ENCODE measurements at regions of chr7 and their contacts with region 1.

Region 1: DNA sequence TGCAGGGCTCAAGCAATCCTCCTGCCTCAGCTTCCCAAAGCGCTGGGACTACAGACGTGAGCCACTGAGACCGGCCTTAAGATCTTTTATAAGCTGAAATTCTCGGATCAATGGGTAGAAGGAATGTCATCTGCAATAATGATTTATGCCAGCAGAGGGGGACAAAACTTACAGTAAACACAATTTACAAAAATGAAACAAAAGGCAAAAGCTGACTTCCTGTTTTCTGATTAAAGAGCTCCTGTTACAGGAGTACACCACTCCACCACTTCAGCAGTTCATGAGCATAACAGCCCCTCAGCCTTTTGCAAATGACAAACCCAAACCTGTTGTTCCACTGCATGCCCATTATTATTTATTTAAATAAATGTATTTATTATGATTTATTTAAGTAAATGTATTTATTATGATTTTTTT is 88.5 kb upstream of the ATP6V0A4 start:
- H3K4me3 Mint-ChIP-seq: no peak overlapping the region
- H3K27ac Mint-ChIP-seq: no peak overlapping the region
- H3K4me1 Mint-ChIP-seq: no peaks in the 10 kb centered on the region
- H3K27me3 Mint-ChIP-seq: no peaks in the 10 kb centered on the region

Region 2: GRCh38 chr7:138854115-138854645 is 32.3 kb before region 1 on chr7:
- intact Hi-C with region 1: no loop called
- H3K4me3 Mint-ChIP-seq: no peak overlapping the region
- H3K27ac Mint-ChIP-seq: no peak overlapping the region
- H3K4me1 Mint-ChIP-seq: no peaks in the 10 kb centered on the region
- H3K27me3 Mint-ChIP-seq: no peaks in the 10 kb centered on the region

Region 3: DNA sequence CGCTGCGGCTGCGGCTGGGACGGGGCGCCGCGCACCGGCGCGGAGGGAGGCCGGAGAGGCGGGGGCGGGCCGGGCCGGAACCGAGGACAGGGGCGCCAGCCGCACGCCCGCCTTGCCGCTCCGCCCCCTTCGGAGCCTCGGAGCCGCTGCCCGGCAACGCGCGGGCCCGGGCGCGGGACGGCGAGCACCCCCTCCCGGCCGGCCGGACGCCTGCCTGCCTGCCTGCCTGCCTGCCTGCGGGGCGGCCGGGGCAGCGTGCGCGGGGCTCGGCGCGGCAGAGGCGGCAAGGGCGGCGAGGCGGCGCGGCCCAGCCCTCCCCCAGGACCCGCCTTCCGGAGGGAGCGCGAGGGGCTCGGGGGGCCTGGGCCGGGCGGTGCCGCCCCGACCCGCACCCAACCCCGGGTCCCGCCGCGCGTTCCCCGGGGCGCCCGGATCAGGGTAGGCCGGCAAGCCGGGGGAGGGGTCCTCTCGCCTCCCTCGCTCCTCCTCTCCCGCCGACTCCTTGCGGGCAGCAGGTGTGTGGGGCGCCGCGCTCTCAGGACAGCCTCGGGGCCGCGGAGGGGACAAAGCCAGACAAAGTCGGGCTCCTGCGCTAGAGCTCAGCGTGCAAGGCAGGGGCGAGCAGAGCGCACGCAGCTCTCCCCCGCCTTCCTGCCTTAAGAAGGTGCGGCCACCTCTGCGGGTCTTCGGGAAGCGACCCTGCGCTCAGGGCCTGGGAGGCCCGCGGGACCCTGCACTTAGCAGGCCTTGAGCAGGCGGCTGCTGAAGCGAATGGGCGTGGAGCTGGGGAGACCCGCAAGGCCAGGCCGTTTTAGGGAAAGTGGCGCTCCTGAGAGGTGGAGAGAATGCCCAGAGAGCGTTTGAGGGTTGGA is 95.1 kb after region 1 on chr7 and contains the start of gene KIAA1549:
- intact Hi-C with region 1: loop called (anchors 2 kb)
- H3K4me3 Mint-ChIP-seq: peak within 1 kb of the TSS; percentile 82
- H3K27ac Mint-ChIP-seq: no peak within 1 kb of the TSS
- H3K4me1 Mint-ChIP-seq: peaks cover 15% of the 10 kb centered on the region
- H3K27me3 Mint-ChIP-seq: peaks cover 45% of the 10 kb centered on the region

Region 4: DNA sequence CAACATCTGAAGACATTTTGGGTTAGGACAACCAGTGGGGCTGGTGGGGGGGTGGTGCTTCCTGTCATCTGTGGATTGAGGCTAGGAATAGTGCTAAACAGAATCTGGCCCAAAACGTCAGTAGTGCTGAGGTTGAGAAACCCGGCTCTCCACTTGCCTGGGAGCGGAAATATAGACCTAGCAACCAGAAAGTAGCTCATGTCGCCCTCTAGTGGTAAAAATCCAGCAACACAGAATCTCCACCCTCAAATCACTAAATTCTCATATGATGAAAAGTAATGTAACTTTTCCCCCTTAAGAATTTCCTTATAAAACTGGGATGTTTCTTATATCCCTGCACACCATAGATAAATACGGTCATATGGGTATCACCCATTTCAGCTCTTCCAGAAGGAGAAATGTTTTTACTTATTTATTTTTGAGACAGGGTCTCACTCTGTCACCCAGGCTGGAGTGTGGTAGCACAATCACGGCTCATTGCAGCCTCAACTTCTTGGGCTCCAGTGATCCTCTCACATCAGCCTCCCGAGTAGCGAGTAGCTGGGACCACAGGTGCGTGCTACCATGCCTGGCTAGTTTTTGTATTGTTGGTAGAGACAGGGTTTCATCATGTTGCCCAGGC is 188.6 kb after region 1 on chr7:
- intact Hi-C with region 1: loop called (anchors 10 kb)
- H3K4me3 Mint-ChIP-seq: no peak overlapping the region
- H3K27ac Mint-ChIP-seq: no peak overlapping the region
- H3K4me1 Mint-ChIP-seq: peaks cover 23% of the 10 kb centered on the region
- H3K27me3 Mint-ChIP-seq: no peaks in the 10 kb centered on the region

Measured in dendritic cell treated with granulocyte-macrophage colony-stimulating factor and Interleukin-4, amounts not matched to agents 40 ng/mL and 50 ng/mL, for 4 days (primary cell).